Activated T-helper 1 cell treated with anti-CD3 and anti-CD28 coated beads, Interleukin-12 subunit alpha, Interleukin-12 subunit beta, Interleukin-2, Interleukin-4 antibody, amounts not matched to agents 30 ng/mL and 10 ng/mL and 1 ng/mL, durations not matched to agents 14 hours and 24 hours and 36 hours (primary cell): ENCODE measurements at regions of chr5 and their contacts with region 1.

Region 1: DNA sequence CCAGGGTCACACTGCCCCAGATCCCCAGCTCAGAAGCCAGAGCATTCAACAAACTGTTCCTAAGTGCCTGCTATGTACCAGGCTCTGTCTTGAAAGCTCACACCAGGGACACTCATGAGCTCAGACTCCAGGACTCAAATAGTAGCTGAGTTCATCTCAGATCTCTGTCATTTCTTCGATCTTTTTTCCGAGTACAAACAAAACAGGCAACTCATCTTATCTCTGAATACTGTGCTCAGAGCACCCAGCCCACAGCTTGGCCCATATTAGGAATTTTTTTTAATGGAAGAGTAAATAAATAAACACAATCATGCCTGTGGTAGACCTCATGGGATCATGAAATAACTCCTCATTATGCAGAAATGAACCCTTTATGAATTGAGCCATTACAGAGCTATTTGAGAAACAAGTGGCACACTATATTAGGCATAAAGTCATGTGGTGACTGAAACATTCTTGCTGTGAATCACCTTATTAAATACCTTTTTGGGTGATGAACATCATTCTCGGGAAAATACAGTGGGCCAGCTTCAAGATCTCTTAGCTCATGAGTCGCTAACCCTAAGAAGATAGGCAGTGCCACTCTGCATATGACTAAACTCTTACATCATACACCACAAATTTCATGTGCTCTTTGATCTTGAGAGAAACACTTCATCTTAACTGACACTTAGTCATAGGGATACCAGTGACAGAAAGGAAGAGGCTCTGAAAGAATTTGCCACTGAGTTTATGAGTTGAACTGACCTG is 9.9 kb downstream of the SH3RF2 start:
- DNase-seq: peak; percentile 19
- H3K4me3 Mint-ChIP-seq: peak overlapping the region; percentile 5
- H3K27ac Mint-ChIP-seq: peak overlapping the region; percentile 73
- H3K4me1 Mint-ChIP-seq: peaks cover 44% of the 10 kb centered on the region
- H3K27me3 Mint-ChIP-seq: peaks cover 36% of the 10 kb centered on the region

Region 2: GRCh38 chr5:145743396-145744061 is 202.8 kb before region 1 on chr5:
- intact Hi-C with region 1: loop called (anchors 5 kb)
- DNase-seq: no peak
- H3K4me3 Mint-ChIP-seq: no peak overlapping the region
- H3K27ac Mint-ChIP-seq: no peak overlapping the region
- H3K4me1 Mint-ChIP-seq: no peaks in the 10 kb centered on the region
- H3K27me3 Mint-ChIP-seq: no peaks in the 10 kb centered on the region

Region 3: GRCh38 chr5:146079695-146080361 is 133.5 kb after region 1 on chr5:
- intact Hi-C with region 1: loop called (anchors 1 kb)
- DNase-seq: no peak
- H3K4me3 Mint-ChIP-seq: no peak overlapping the region
- H3K27ac Mint-ChIP-seq: no peak overlapping the region
- H3K4me1 Mint-ChIP-seq: peaks cover 35% of the 10 kb centered on the region
- H3K27me3 Mint-ChIP-seq: peaks cover 34% of the 10 kb centered on the region

Region 4: GRCh38 chr5:146179696-146180095 is 233.4 kb after region 1 on chr5:
- intact Hi-C with region 1: loop called (anchors 5 kb)
- DNase-seq: no peak
- H3K4me3 Mint-ChIP-seq: peak overlapping the region; percentile 99
- H3K27ac Mint-ChIP-seq: no peak overlapping the region
- H3K4me1 Mint-ChIP-seq: peaks cover 12% of the 10 kb centered on the region
- H3K27me3 Mint-ChIP-seq: no peaks in the 10 kb centered on the region

Region 5: GRCh38 chr5:146192571-146193043 is 246.3 kb after region 1 on chr5:
- intact Hi-C with region 1: no loop called
- DNase-seq: no peak
- H3K4me3 Mint-ChIP-seq: no peak overlapping the region
- H3K27ac Mint-ChIP-seq: no peak overlapping the region
- H3K4me1 Mint-ChIP-seq: no peaks in the 10 kb centered on the region
- H3K27me3 Mint-ChIP-seq: peaks cover 10% of the 10 kb centered on the region

Region 6: DNA sequence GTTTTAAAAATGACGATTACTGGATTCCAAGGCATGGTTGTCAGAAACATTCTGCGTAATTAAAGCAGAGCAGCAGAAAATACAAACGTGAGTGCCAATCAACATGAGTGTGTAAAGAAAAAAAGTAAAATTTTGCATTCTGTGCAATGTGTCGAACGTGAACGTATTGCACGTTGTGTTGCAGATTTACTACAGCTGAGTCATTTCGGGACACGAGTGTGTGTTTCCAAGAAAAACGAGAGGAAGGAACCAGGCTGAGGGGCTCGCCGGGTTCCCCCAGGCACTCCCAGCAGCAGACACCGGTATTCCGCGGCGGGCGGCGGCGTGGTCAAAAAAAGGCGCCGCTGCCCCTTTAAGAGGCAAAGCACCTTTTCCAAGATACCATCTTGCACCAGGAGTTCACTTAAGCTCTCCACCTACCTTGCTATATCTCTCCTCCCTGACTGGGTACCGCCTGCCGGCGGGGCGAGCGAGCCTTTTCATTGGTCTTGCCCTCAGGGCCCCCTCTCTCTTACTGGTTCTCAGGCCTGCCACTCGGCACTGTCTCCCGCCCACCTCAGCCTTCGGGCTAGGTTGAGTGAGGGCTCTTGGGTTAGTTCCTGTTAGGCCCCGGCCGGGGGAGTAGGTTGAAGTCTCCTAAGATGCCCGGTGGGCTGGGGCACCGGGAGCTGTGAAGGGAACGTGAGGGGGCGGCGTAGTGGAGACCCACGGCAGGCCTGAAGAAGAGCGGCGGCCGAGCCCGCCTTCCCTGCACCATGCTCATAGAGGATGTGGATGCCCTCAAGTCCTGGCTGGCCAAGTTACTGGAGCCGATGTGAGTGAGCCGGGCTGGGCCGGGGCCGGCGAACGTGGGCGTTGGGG is 257.0 kb after region 1 on chr5 and contains the start of gene RBM27:
- intact Hi-C with region 1: loop called (anchors 1 kb)
- DNase-seq: peak; percentile 97
- H3K4me3 Mint-ChIP-seq: no peak within 1 kb of the TSS
- H3K27ac Mint-ChIP-seq: no peak within 1 kb of the TSS
- H3K4me1 Mint-ChIP-seq: no peaks in the 10 kb centered on the region
- H3K27me3 Mint-ChIP-seq: no peaks in the 10 kb centered on the region
- total RNA-seq, gene RBM27: 31.2 and 33.5 TPM in 2 replicates

Region 7: GRCh38 chr5:146446853-146447733 is 500.8 kb after region 1 on chr5 and contains the start of gene TCERG1:
- intact Hi-C with region 1: loop called (anchors 1 kb)
- DNase-seq: peak; percentile 97
- H3K4me3 Mint-ChIP-seq: peak within 1 kb of the TSS; percentile 95
- H3K27ac Mint-ChIP-seq: peak within 1 kb of the TSS; percentile 98
- H3K4me1 Mint-ChIP-seq: peaks cover 33% of the 10 kb centered on the region
- H3K27me3 Mint-ChIP-seq: no peaks in the 10 kb centered on the region
- total RNA-seq, gene TCERG1: 152 and 160 TPM in 2 replicates

Region 8: DNA sequence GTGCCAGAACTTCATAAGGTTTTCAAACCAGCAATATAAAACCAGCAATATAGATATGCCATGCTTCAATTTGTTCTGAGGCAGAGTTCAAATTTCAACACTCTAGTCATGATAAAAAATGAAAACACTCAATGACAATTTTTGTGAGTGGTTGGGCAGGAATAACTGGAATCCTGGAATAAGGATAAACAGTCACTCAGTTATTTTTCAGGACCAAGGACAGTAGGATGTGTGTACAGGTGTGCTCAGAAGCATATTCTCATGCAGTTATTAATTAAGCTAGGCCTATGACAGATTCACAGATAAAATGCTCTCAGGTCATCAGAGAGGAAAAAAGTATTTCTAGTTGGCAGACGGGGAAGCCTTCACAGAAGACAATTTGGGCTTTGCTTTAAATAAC is 1049.6 kb after region 1 on chr5:
- intact Hi-C with region 1: no loop called
- DNase-seq: no peak
- H3K4me3 Mint-ChIP-seq: no peak overlapping the region
- H3K27ac Mint-ChIP-seq: no peak overlapping the region
- H3K4me1 Mint-ChIP-seq: no peaks in the 10 kb centered on the region
- H3K27me3 Mint-ChIP-seq: no peaks in the 10 kb centered on the region